AG04449 (cell line): ENCODE measurements at regions of chr2 and their contacts with region 1.

Region 1: GRCh38 chr2:9234680-9235387 is 28.2 kb downstream of the ASAP2 start:
- DNase-seq: peak; percentile 42
- H3K4me3 ChIP-seq: no peak overlapping the region
- CTCF ChIP-seq: no peak

Region 2: GRCh38 chr2:9251154-9252001 is 16.5 kb after region 1 on chr2:
- CTCF ChIA-PET with region 1: interaction called, 5 read pairs
- POLR2A ChIA-PET with region 1: interaction called, 10 read pairs
- DNase-seq: peak; percentile 37
- H3K4me3 ChIP-seq: no peak overlapping the region; the same call in 1 of the 2 replicates
- CTCF ChIP-seq: no peak

Region 3: DNA sequence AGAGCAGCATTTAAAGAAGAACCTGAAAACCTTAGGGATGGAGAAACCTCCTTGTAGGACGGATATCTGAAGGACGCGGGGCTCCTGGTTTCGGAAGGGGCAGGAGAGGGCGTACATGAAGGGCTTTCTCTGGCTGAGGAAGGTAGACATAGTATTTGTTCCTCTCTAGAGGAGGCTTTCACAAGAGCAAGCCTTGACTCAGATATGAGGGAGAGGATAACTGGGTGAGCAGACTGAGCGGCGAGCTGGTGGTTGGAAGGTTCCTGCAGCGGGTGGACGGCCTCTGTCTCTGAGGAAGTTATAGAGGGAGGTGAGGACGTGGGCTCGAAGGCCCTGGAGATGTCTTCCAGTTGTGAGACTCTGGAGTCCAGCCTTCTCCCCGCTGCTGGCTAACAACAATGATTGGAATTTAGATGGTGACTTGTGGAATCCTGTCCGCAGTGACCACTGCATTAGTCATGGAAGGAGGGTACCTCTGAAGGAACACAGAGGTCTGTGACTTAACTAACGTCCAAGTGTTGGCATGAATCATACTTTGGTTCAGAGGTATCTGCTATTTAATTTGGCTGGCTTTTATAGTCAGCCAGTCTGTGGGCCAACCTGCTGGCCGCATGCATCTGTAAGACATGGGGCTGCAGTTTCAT is 52.7 kb after region 1 on chr2:
- CTCF ChIA-PET with region 1: no interaction called
- POLR2A ChIA-PET with region 1: interaction called, 10 read pairs
- DNase-seq: peak; percentile 96
- H3K4me3 ChIP-seq: peak overlapping the region; percentile 8; the same call in 1 of the 2 replicates
- CTCF ChIP-seq: no peak

Region 4: DNA sequence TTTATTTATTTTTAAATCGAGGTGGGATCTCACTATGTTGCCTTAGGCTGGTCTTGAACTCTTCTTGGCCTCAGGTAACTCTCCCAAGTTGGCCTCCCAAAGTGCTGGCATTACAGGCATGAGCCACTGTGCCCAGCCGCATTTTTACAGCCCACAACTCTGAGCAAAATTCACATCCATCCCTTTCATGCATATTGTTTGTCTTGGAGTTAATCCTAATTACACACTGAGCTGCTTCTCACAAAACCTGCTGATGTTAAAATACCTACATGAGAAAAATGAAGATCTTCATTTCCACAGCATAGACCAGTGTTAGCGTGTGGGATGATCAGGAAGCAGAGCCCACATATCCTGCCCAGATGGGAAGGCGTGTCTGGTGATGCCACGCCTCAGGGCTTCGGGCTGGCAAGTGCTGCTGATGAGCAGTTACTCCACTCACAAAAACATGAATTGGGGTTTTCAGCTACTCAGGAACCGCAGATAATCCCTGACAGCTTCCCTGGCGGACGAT is 173.9 kb after region 1 on chr2:
- CTCF ChIA-PET with region 1: no interaction called
- POLR2A ChIA-PET with region 1: no interaction called
- DNase-seq: no peak
- H3K4me3 ChIP-seq: no peak overlapping the region
- CTCF ChIP-seq: no peak

Region 5: DNA sequence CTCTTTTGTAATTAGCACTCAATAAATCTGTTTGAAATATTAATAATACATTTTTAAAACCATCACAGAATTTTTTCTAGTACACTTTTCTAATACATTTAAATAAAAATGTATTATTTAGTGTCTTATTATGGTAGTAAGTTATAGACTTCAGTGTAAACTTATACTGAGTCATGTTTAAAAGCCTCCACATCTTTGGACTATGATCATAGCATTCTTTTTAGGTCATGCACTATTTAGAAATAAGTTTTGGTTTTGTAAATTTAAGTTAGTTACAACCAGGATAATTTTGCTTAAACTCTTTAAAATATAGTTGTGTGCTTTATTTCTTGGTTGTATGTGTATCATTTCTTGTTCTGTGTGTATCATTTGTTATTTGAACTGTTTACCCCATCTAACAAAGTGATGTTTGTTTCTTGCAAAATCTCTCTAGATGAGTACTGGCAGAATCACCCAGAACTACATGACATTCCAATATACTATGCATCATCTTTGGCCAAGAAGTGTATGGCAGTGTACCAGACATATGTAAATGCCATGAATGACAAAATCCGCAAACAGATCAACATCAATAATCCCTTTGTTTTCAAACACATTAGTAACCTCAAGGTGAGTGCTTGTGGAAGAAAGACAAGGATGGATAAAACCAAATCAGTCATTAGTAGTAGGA is 205.4 kb after region 1 on chr2:
- CTCF ChIA-PET with region 1: no interaction called
- POLR2A ChIA-PET with region 1: no interaction called
- DNase-seq: no peak
- H3K4me3 ChIP-seq: no peak overlapping the region
- CTCF ChIP-seq: no peak